Endothelial cell of umbilical vein (primary cell): ENCODE measurements at regions of chr10 and their contacts with region 1.

Region 1: GRCh38 chr10:96017191-96017687 is 26.1 kb upstream of the CCNJ start:
- DNase-seq: peak; percentile 87
- H3K4me3 ChIP-seq: no peak overlapping the region
- H3K27ac ChIP-seq: no peak overlapping the region
- H3K4me1 ChIP-seq: no peaks in the 10 kb centered on the region
- H3K27me3 ChIP-seq: peaks cover 0 to 8% of the 10 kb centered on the region in 2 experiments
- CTCF ChIP-seq: peak; percentile 65 to 71
- POLR2A ChIP-seq: no peak

Region 2: DNA sequence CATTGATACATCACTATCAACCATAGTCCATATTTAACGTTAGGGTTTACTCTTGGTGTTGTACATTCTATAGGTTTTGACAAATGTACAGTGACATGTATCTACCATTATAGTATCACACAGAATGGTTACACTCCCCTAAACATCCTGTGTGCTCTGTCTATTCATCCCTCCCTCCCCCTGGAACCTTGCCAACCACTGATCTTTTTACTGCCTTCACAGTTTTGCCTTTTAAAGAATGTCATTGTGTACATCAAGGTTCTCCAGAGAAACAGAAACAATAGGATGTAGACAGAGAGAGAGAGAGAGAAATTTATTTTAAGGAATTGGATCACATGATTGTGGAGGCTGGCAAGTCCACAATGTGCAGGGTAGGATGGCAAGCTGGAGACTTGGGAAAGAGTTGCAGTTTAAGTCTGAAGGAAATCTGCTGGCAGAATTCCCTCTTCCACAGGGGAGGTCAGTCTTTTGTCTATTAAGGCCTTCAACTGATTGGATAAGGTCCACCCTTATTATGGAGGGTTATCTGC is 18.9 kb before region 1 on chr10:
- CTCF ChIA-PET with region 1: interaction called, 16 read pairs
- POLR2A ChIA-PET with region 1: no interaction called
- dilution Hi-C with region 1: no loop called
- intact Hi-C with region 1: no loop called
- DNase-seq: no peak
- H3K4me3 ChIP-seq: no peak overlapping the region
- H3K27ac ChIP-seq: no peak overlapping the region
- H3K4me1 ChIP-seq: no peaks in the 10 kb centered on the region
- H3K27me3 ChIP-seq: no peaks in the 10 kb centered on the region
- CTCF ChIP-seq: no peak
- POLR2A ChIP-seq: no peak

Region 3: DNA sequence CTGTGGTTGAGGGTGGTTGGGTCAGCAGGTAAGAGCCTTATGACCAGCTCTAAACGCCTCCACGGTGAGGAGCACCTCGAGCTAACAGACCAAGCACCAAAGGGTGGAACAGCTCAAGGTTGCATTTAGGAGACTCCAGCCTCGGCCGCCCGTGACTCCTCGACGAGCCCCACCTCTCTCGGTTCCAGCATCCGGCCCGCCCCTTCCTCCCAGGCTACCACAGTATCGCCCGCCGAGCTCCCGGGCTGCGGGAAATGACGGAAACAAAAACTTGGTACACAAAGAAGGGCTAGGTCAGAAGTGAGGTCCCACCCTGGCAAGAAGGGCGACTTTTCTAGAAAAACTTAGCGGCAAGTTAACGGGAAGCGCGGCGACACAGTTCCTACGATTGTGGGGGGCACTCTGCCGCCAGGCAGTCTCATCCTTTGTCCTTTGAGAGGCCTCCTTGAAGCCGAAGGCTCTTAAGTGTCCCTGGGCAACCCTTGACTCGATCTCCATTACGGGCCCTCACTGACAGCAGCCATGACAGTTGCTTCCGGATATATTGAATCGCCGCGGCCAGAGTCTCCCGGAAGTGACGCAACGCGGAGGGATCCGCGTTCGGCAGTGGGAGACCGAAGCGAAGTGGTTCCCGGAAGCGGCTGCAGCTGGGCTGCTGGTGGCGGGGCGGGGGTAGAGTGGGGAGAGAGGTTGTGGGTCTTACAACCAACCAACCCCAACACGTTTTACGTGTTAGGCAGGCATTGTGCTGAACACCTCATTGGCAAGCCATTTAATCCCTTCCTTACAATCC is 72.6 kb after region 1 on chr10:
- CTCF ChIA-PET with region 1: interaction called, 7 read pairs
- POLR2A ChIA-PET with region 1: no interaction called
- dilution Hi-C with region 1: no loop called
- intact Hi-C with region 1: loop called (anchors 1 kb)
- DNase-seq: peak; percentile 86
- H3K4me3 ChIP-seq: peak overlapping the region; percentile 40 to 67 (median 67)
- H3K27ac ChIP-seq: peak overlapping the region; percentile 84
- H3K4me1 ChIP-seq: peaks cover 4% of the 10 kb centered on the region
- H3K27me3 ChIP-seq: peaks cover 19 to 23% of the 10 kb centered on the region in 2 experiments
- CTCF ChIP-seq: no peak
- POLR2A ChIP-seq: peak; percentile 66

Region 4: GRCh38 chr10:96129387-96130325 is 112.4 kb after region 1 on chr10 and contains the start of gene ZNF518A:
- CTCF ChIA-PET with region 1: interaction called, 17 read pairs
- POLR2A ChIA-PET with region 1: interaction called, 4 read pairs
- dilution Hi-C with region 1: no loop called
- intact Hi-C with region 1: loop called (anchors 1 kb)
- DNase-seq: peak; percentile 92
- H3K4me3 ChIP-seq: peak within 1 kb of the TSS; percentile 38 to 96 (median 61)
- H3K27ac ChIP-seq: peak within 1 kb of the TSS; percentile 91
- H3K4me1 ChIP-seq: peaks cover 15% of the 10 kb centered on the region
- H3K27me3 ChIP-seq: no peaks in the 10 kb centered on the region
- CTCF ChIP-seq: no peak
- POLR2A ChIP-seq: peak; percentile 77
- total RNA-seq, gene ZNF518A: 11.9 and 12.1 TPM in 2 replicates

Region 5: GRCh38 chr10:96287392-96288105 is 270.3 kb after region 1 on chr10:
- CTCF ChIA-PET with region 1: interaction called, 127 read pairs
- POLR2A ChIA-PET with region 1: no interaction called
- dilution Hi-C with region 1: no loop called
- intact Hi-C with region 1: no loop called
- DNase-seq: no peak
- H3K4me3 ChIP-seq: no peak overlapping the region
- H3K27ac ChIP-seq: no peak overlapping the region
- H3K4me1 ChIP-seq: no peaks in the 10 kb centered on the region
- H3K27me3 ChIP-seq: peaks cover 3 to 9% of the 10 kb centered on the region in 2 experiments
- CTCF ChIP-seq: no peak
- POLR2A ChIP-seq: no peak

Region 6: DNA sequence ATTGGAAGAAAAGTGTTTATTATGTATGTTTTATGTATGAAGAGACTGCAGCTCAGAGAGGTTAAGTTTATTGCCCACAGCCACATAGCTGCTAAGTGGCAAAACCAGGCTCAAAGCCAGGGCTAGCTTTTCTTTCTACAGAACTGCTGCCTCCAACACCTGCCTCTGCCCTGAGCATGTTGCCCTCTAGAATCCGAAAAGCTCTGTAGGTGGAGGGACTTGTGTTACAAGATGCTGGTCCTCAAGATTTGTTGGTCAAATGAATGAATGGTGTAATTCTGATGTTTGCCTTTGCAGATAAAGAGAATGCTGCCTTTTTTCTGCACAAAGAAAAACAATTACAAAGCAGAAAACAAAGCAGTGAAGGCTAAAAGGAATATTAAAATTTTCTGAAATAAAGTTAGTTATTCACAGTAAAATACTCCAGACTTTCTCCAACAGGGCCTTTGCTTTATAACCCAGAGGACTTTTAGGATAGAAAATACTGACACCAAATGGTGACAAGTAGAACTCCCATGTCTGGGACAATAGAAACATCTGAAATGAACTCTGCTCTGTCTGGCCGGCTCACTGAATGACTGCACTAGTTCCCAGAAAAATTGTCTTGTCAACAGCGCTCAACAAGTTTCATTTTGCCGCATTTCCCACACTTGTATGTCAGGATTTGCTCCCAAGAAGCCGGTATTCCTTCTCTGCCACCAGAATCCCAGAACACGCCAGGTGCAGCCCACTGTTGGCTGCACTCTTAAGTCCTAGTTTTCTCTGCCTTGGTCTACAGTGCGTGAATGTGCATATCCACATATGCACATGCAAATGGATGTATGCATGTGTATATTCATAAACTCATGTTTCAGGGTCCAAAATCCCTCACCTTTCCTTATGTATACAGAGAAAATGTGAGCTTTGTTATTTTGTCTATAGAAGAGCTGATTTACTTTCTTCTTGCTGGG is 276.0 kb after region 1 on chr10:
- CTCF ChIA-PET with region 1: interaction called, 127 read pairs
- POLR2A ChIA-PET with region 1: no interaction called
- dilution Hi-C with region 1: no loop called
- intact Hi-C with region 1: loop called (anchors 1 kb)
- DNase-seq: peak; percentile 52
- H3K4me3 ChIP-seq: no peak overlapping the region
- H3K27ac ChIP-seq: no peak overlapping the region
- H3K4me1 ChIP-seq: no peaks in the 10 kb centered on the region
- H3K27me3 ChIP-seq: peaks cover 9 to 30% of the 10 kb centered on the region in 2 experiments
- CTCF ChIP-seq: peak; percentile 33 to 41
- POLR2A ChIP-seq: no peak

Region 7: GRCh38 chr10:96339957-96340904 is 323.0 kb after region 1 on chr10:
- CTCF ChIA-PET with region 1: interaction called, 154 read pairs
- POLR2A ChIA-PET with region 1: no interaction called
- dilution Hi-C with region 1: no loop called
- intact Hi-C with region 1: loop called (anchors 1 kb)
- DNase-seq: peak; percentile 53
- H3K4me3 ChIP-seq: no peak overlapping the region
- H3K27ac ChIP-seq: no peak overlapping the region
- H3K4me1 ChIP-seq: no peaks in the 10 kb centered on the region
- H3K27me3 ChIP-seq: peaks cover 3 to 4% of the 10 kb centered on the region in 2 experiments
- CTCF ChIP-seq: peak; percentile 77 to 79
- POLR2A ChIP-seq: no peak